A549 (cell line): ENCODE measurements at regions of chr16 and their contacts with region 1.

Region 1: DNA sequence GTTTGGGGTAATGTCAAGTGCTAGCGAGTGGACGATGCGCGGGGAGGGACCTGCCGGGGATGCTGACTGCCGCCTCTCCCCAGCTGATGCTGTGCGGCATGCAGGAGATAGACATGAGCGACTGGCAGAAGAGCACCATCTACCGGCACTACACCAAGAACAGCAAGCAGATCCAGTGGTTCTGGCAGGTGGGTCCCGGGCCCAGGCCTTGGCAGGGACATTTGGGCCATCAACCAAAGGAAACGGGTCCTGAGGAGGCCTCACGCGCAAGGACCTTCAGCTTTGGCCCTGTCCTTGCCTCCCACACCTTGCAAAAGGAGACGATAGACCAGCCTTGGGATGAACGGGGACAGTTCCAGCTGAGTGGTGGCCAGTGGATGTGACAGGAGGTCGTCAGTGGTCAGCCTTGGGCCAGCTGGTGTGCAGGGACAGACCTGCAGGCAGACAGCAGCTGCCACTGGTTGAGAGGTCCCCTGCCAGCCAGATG is 13.6 kb upstream of the CLEC18A start:
- DNase-seq: peak; percentile 60 to 72
- ATAC-seq: peak; percentile 91 to 92
- H3K4me3 ChIP-seq: no peak overlapping the region
- H3K27ac ChIP-seq: no peak overlapping the region
- H3K4me1 ChIP-seq: no peaks in the 10 kb centered on the region
- CTCF ChIP-seq: peak; percentile 60
- EP300 ChIP-seq: no peak
- POLR2A ChIP-seq: no peak
- RAD21 ChIP-seq: peak; percentile 76 to 85

Region 2: DNA sequence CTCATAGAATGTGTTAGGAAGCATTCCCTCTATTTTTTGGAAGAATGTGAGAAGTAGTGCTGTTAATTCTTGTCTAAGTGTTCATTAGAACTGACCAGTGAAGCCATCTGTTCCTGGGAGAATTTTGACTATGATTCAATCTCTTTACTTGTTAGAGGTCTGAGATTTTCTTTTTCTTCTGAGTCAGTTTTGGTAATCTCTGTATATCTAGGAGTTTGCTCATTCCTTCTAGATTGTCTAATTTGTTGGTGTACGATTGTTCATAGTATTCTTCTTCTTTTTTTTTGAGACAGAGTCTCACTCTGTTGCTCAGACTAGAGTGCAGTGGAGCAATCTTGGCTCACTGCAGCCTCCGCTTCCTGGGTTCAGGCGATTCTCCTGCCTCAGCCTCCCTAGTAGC is 1831.9 kb before region 1 on chr16:
- CTCF ChIA-PET with region 1: no interaction called
- POLR2A ChIA-PET with region 1: no interaction called
- DNase-seq: no peak
- ATAC-seq: no peak
- H3K4me3 ChIP-seq: no peak overlapping the region
- H3K27ac ChIP-seq: no peak overlapping the region
- H3K4me1 ChIP-seq: no peaks in the 10 kb centered on the region
- CTCF ChIP-seq: no peak
- EP300 ChIP-seq: no peak
- POLR2A ChIP-seq: no peak
- RAD21 ChIP-seq: no peak

Region 3: DNA sequence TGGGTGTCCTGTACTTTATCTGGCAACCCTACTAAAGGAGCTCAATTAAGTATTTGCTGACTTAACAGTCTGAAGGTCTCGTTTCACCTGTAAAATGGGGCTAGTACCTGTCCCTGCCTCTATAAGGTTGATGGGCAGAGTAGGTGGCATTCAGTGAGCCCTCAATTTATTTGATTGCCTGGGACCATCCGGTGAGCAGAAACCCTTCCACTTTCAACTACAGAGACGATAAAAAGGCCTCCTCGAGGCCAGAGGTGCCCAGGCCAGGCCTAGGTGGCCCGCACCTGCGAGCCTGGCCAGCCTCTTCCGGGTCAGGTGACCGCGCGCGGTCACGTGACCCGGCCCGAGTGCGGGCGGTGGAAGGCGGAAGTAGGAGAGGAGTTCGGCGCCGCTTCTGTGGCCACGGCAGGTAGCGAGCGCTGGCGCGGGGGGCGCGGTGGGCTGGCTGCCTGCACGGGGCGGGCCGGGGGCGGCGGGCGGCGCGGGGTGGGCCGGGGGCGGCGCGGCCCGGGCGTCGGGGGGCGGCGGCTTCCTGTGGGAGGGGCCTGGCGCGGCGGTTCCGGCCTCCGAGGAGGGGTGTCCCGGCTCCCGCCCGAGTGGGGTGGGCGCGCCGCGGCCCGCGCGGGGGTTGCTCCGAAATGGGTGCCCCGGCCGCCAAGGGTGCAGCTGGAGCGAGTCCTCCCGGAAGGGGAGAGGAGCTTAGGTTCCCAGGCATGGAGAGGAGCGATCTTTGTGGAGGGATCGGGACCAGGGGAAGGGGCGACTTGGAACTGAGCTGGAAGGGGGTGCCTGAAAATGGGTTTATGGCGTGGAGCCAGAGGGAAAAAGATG is 175.3 kb before region 1 on chr16 and contains the start of gene WWP2:
- CTCF ChIA-PET with region 1: interaction called, 10 read pairs
- POLR2A ChIA-PET with region 1: no interaction called
- DNase-seq: peak; percentile 77 to 82
- ATAC-seq: peak; percentile 85 to 92
- H3K4me3 ChIP-seq: peak within 1 kb of the TSS; percentile 65
- H3K27ac ChIP-seq: peak within 1 kb of the TSS; percentile 80 to 95
- H3K4me1 ChIP-seq: peaks cover 11% of the 10 kb centered on the region; the same call in 2 of the 3 replicates
- CTCF ChIP-seq: no peak
- EP300 ChIP-seq: no peak
- POLR2A ChIP-seq: peak; percentile 71
- RAD21 ChIP-seq: no peak
- polyA plus RNA-seq, gene WWP2: 15.5 and 16.1 TPM in 2 replicates

Region 4: DNA sequence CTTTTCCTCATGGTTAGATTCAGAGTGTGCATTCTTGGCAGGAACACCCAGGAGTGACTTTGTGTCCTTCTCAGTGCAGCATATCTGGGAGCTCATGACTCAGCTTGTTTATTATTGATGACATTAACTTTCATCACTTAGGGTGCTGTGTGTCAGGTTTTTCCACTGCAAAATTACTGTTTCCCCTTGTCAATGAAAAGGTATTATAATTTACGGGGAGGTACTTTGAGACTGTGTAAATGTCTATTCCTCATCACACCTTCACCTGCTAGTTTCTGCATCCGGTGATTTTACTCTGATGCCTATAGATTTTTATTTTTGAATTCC is 124.9 kb before region 1 on chr16:
- CTCF ChIA-PET with region 1: interaction called, 10 read pairs
- POLR2A ChIA-PET with region 1: interaction called, 4 read pairs
- DNase-seq: peak; percentile 36 to 37
- ATAC-seq: peak; percentile 74 to 81
- H3K4me3 ChIP-seq: no peak overlapping the region
- H3K27ac ChIP-seq: peak overlapping the region; percentile 71 to 83
- H3K4me1 ChIP-seq: peaks cover 36% of the 10 kb centered on the region
- CTCF ChIP-seq: no peak
- EP300 ChIP-seq: no peak
- POLR2A ChIP-seq: no peak
- RAD21 ChIP-seq: no peak

Region 5: GRCh38 chr16:69859105-69859989 is 78.2 kb before region 1 on chr16:
- CTCF ChIA-PET with region 1: interaction called, 10 read pairs
- POLR2A ChIA-PET with region 1: no interaction called
- DNase-seq: peak; percentile 54 to 57
- ATAC-seq: peak; percentile 83 to 91; a peak in 5 of 6 replicates
- H3K4me3 ChIP-seq: no peak overlapping the region
- H3K27ac ChIP-seq: peak overlapping the region; percentile 29 to 67; a peak in 4 of 6 replicates
- H3K4me1 ChIP-seq: peaks cover 12% of the 10 kb centered on the region
- CTCF ChIP-seq: peak; percentile 64
- EP300 ChIP-seq: no peak
- POLR2A ChIP-seq: no peak
- RAD21 ChIP-seq: peak; percentile 63 to 69

Region 6: DNA sequence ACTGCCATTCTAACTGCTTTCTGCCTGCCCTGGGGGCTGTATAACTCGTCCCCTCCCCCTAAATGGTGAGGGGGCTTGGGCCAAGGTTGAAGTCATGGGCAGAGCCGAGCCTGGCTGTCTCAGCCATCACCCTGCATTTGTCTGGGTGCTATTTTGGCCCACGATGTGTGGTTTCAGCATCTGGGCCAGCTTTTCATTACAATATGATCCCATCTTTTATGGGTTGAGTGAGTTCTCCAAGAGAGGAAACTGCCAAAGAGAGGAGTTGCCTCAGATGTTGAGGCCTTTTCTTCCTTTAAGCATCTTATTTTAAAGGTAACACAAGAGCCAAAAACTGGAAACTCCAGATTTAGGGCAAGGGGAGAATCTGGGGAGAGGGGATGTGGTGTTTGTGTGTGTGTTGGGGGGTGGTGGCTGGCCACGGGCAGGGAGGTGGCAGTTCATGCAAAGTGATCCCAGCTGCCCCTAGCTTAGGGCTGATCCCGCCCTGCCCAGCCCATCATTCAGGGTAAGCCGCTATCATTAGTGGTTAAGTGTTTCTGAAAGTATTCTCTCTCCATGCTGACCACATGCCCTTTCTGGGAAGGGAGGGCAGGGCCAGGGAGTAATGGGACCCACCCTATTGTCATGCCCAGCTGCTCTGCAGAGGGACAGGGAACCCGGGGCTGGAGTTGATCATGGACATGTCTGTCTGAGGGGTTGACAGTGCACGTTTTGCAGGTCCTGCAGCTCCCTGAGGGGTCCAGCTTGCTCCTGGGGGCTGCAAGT is 69.5 kb before region 1 on chr16:
- CTCF ChIA-PET with region 1: interaction called, 12 read pairs
- POLR2A ChIA-PET with region 1: no interaction called
- DNase-seq: no peak
- ATAC-seq: no peak; a peak in 1 of 6 replicates
- H3K4me3 ChIP-seq: no peak overlapping the region
- H3K27ac ChIP-seq: no peak overlapping the region
- H3K4me1 ChIP-seq: no peaks in the 10 kb centered on the region
- CTCF ChIP-seq: no peak
- EP300 ChIP-seq: no peak
- POLR2A ChIP-seq: no peak
- RAD21 ChIP-seq: no peak

Region 7: DNA sequence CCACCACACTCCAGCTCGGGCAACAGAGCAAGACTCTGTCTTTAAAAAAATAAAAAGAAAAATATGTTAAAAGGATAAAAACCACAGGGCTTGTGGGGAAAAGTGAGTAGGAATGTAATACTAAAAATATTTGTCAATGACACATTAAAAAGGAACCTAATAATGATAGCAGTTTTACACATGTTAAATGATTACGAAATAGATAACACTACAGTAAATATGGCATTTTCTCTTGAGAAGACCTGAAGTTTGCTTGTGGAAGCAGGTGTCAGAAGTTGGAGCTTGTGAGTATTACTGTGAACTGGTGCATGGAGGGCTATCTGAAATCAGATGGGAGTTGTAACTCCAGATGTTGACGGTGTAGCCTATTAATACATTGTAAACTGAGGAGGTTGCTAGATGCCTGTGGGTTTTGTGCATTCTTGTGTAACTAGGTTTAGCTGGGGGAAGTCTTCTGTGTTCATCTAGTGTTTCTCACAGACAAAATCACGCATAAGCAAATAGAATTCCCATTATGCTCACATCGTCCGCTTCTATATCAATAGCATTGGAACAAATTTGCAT is 30.6 kb before region 1 on chr16:
- CTCF ChIA-PET with region 1: interaction called, 10 read pairs
- POLR2A ChIA-PET with region 1: no interaction called
- DNase-seq: no peak
- ATAC-seq: no peak
- H3K4me3 ChIP-seq: no peak overlapping the region
- H3K27ac ChIP-seq: no peak overlapping the region
- H3K4me1 ChIP-seq: peaks cover 3% of the 10 kb centered on the region; the same call in 1 of the 3 replicates
- CTCF ChIP-seq: no peak
- EP300 ChIP-seq: no peak
- POLR2A ChIP-seq: no peak
- RAD21 ChIP-seq: no peak